ENCODE measurements at regions of chr10 and their contacts with region 1.

Region 1: GRCh38 chr10:104485632-104486031 is 132.0 kb downstream of the CFAP58 start:
- DNase-seq: no peak
- H3K4me3 ChIP-seq: no peak overlapping the region
- H3K27ac ChIP-seq: no peak overlapping the region
- H3K4me1 ChIP-seq: 0 out of 7 replicates have a peak, but pooled peaks cover 0 to 2% (median 1%) of the 10 kb centered on the region in 4 experiments
- H3K27me3 ChIP-seq: no peaks in the 10 kb centered on the region
- CTCF ChIP-seq: peak in 2 of 3 experiments; percentile 43 to 66; a peak in 3 of 4 replicates
- EP300 ChIP-seq: no peak
- POLR2A ChIP-seq: no peak
- RAD21 ChIP-seq: peak; percentile 8 to 31; a peak in 2 of 4 replicates

Region 2: DNA sequence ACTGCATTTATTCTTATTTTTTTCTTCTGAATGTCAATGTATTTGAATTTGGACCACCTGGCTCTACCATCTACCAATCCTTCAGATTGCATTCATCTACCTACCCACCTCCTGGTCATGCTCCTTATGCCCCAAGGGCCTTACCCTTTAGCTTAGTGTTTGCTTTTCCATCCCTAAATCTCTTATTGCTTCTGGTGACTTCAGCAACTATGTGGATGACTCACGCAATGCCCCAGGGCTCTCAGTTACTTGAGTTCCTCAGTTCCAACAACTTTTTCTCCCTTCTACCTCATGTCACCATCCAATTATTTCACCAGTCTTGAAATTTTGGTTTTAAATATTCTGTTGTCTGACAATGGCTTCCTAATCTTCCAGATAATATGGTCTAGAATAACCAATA is 13.1 kb before region 1 on chr10:
- CTCF ChIA-PET with region 1: interaction called, 21 read pairs
- POLR2A ChIA-PET with region 1: no interaction called
- DNase-seq: no peak
- H3K4me3 ChIP-seq: no peak overlapping the region
- H3K27ac ChIP-seq: no peak overlapping the region
- H3K4me1 ChIP-seq: no peaks in the 10 kb centered on the region
- H3K27me3 ChIP-seq: no peaks in the 10 kb centered on the region
- CTCF ChIP-seq: no peak
- EP300 ChIP-seq: no peak
- POLR2A ChIP-seq: no peak
- RAD21 ChIP-seq: no peak

Region 3: GRCh38 chr10:104501864-104502579 is 16.4 kb after region 1 on chr10:
- CTCF ChIA-PET with region 1: interaction called, 11 read pairs
- POLR2A ChIA-PET with region 1: no interaction called
- DNase-seq: no peak
- H3K4me3 ChIP-seq: no peak overlapping the region
- H3K27ac ChIP-seq: no peak overlapping the region
- H3K4me1 ChIP-seq: peaks cover 0 to 8% (median 5%) of the 10 kb centered on the region in 4 experiments; a peak in 5 of 7 replicates
- H3K27me3 ChIP-seq: no peaks in the 10 kb centered on the region
- CTCF ChIP-seq: no peak
- EP300 ChIP-seq: no peak
- POLR2A ChIP-seq: no peak
- RAD21 ChIP-seq: no peak

Region 4: DNA sequence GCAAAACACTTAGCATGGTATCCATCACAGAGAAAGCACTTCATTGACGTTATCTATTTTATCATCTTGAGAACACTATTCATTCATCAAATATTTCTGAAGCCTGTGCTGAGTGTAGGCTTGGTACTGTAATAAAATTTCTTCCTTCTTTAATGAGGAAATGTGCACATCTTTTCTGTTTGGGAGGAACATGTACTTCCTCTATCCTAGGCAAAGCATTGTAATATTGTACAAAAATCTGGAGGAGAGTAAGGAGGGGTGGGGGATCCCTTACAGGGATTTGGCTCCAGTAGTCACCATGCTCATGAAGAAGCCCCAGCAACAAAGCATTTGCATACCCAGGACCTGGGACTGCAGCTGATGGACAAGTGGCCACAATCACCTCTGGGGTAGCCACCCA is 115.5 kb after region 1 on chr10:
- CTCF ChIA-PET with region 1: no interaction called
- POLR2A ChIA-PET with region 1: no interaction called
- DNase-seq: no peak
- H3K4me3 ChIP-seq: no peak overlapping the region
- H3K27ac ChIP-seq: no peak overlapping the region
- H3K4me1 ChIP-seq: no peaks in the 10 kb centered on the region; a peak in 1 of 7 replicates
- H3K27me3 ChIP-seq: no peaks in the 10 kb centered on the region
- CTCF ChIP-seq: no peak
- EP300 ChIP-seq: no peak
- POLR2A ChIP-seq: no peak
- RAD21 ChIP-seq: no peak

Measured in H1 (cell line).